Activated B cell treated with CpG ODN at 0.5 μM for 24 hours (primary cell): ENCODE measurements at regions of chr12 and their contacts with region 1.

Region 1: DNA sequence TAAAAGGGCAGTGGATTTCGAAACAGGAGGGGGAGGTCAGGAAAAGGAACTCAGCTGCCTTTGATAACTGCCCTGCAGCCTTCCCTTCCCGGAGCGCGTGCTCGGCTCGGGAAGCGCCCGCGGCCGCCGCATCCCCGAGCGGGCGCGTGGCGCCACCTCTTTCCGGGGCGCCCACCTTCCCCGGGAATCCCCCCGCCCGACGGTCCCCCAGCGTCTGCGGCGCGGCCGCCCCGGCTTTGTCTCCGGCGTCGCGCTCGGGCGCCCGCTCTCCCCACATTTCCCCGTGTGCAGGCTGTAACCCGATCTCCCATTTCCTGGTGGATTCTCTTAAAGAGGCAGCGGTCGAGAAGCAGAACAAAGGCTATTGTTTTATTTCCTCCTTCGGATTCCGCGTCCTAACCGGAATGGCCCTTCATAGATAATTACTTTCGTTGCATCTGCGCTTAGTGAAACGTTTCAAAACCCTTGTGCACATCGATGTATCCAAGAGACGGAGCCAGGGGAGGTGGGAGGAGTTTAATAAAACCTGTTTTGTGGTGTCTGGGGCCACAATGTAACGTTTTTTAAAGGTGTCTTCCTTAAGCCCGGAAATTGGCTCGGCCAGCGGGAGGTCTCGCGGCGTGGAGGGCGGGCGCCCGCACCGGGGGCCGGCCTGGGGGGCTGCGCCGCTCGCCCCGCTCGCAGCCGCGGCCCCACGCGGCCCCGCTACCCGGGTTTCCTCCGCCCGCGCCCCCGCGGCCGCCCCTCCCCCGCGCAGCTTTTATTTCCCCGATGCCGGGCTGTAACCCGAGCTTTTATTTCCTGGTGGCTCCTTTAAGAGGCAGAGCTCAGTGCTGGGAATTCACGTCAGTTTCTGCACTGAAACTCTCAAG is at the start of gene ETV6:
- DNase-seq: peak; percentile 72
- ATAC-seq: peak; percentile 54
- H3K4me3 Mint-ChIP-seq: peak within 1 kb of the TSS; percentile 99
- H3K27ac Mint-ChIP-seq: peak within 1 kb of the TSS; percentile 98
- H3K4me1 Mint-ChIP-seq: peaks cover 30% of the 10 kb centered on the region
- H3K27me3 Mint-ChIP-seq: no peaks in the 10 kb centered on the region
- CTCF ChIP-seq: no peak
- total RNA-seq, gene ETV6: 116 and 130 TPM in 2 replicates

Region 2: GRCh38 chr12:11638315-11638916 is 10.7 kb before region 1 on chr12:
- CTCF ChIA-PET with region 1: no interaction called
- POLR2A ChIA-PET with region 1: interaction called, 16 read pairs
- intact Hi-C with region 1: loop called (anchors 1 kb)
- DNase-seq: no peak
- ATAC-seq: no peak
- H3K4me3 Mint-ChIP-seq: no peak overlapping the region
- H3K27ac Mint-ChIP-seq: no peak overlapping the region
- H3K4me1 Mint-ChIP-seq: peaks cover 12% of the 10 kb centered on the region
- H3K27me3 Mint-ChIP-seq: no peaks in the 10 kb centered on the region
- CTCF ChIP-seq: no peak

Region 3: GRCh38 chr12:11711651-11712327 is 62.7 kb after region 1 on chr12:
- CTCF ChIA-PET with region 1: no interaction called
- POLR2A ChIA-PET with region 1: no interaction called
- intact Hi-C with region 1: no loop called
- DNase-seq: no peak
- ATAC-seq: no peak
- H3K4me3 Mint-ChIP-seq: no peak overlapping the region
- H3K27ac Mint-ChIP-seq: no peak overlapping the region
- H3K4me1 Mint-ChIP-seq: peaks cover 35% of the 10 kb centered on the region
- H3K27me3 Mint-ChIP-seq: no peaks in the 10 kb centered on the region
- CTCF ChIP-seq: no peak

Region 4: DNA sequence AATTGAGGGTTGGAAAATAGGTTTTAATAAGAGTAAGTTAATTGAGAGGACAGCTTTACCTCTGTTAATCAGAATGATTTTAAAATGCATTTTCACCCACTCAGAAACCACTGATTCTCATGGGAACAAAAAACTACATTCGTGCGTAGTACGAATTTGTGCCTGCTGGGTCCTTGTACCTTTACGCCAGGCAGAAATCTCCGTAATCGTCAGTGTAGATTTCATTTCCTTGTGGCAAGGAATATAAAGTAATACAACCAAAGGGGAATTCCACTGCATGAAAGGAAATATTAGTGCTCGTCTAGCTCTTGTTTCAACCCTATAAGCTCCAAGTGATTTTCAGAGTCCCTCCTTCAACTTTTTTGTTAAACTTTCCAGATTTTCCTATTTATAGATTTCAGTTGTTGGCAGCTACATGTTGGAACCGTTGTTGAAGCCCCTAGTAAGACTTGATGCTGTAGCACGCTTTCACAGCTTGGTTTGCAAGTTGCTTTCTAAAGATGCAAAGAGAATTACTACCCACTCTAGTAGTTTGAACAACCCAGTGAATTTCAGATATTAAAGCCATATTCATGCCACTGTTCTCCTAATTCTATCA is 91.0 kb after region 1 on chr12:
- CTCF ChIA-PET with region 1: interaction called, 3 read pairs
- POLR2A ChIA-PET with region 1: interaction called, 68 read pairs
- intact Hi-C with region 1: no loop called
- DNase-seq: no peak
- ATAC-seq: peak; percentile 73
- H3K4me3 Mint-ChIP-seq: peak overlapping the region; percentile 66
- H3K27ac Mint-ChIP-seq: peak overlapping the region; percentile 86
- H3K4me1 Mint-ChIP-seq: peaks cover 95% of the 10 kb centered on the region
- H3K27me3 Mint-ChIP-seq: no peaks in the 10 kb centered on the region
- CTCF ChIP-seq: no peak

Region 5: GRCh38 chr12:11765817-11766794 is 117.0 kb after region 1 on chr12:
- CTCF ChIA-PET with region 1: no interaction called
- POLR2A ChIA-PET with region 1: interaction called, 101 read pairs
- intact Hi-C with region 1: loop called (anchors 1 kb)
- DNase-seq: peak; percentile 48
- ATAC-seq: peak; percentile 84
- H3K4me3 Mint-ChIP-seq: peak overlapping the region; percentile 77
- H3K27ac Mint-ChIP-seq: peak overlapping the region; percentile 93
- H3K4me1 Mint-ChIP-seq: peaks cover 92% of the 10 kb centered on the region
- H3K27me3 Mint-ChIP-seq: no peaks in the 10 kb centered on the region
- CTCF ChIP-seq: no peak

Region 6: DNA sequence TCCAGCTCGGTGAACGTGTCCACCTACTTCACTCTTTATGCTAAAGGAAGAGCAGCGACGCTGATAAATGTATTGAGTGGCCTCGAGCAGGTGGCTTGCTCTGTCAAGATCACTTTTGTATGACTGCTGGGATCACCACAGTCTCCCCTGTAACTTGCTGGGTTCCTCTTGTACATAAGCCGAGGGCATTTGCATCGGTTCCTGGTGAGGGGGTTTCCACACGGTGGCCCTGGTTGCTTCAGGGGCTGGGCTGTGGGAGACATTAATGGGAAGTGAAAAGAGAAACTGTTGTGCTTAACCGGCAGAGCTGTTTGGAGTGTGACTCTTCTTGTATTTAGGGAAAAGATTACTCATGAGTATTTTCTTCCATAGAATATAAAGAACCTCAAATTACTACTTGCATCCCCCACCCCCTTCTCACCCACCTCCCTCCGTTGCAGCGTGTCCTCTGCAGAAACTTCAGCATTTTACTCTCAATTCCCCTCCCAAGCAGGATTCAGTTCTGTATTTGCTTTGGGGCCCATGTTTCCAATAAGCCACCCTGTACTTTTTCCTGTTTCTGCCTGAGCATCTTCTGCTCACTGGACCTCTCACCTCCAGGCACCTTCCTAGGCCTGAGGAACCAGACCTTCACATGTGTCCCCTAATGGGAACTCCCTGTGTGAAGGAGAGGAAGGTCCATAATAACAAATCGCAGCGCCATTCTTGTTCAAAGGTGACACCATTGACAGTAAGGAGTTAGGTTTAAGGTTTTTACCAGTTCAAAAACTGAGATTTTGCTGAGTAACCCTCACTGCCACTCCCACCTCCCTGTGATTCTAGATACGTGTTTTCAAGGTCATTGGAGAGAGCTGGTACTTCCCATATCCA is 187.4 kb after region 1 on chr12:
- CTCF ChIA-PET with region 1: no interaction called
- POLR2A ChIA-PET with region 1: interaction called, 34 read pairs
- intact Hi-C with region 1: loop called (anchors 1 kb)
- DNase-seq: peak; percentile 73
- ATAC-seq: peak; percentile 94
- H3K4me3 Mint-ChIP-seq: peak overlapping the region; percentile 73
- H3K27ac Mint-ChIP-seq: peak overlapping the region; percentile 95
- H3K4me1 Mint-ChIP-seq: peaks cover 81% of the 10 kb centered on the region
- H3K27me3 Mint-ChIP-seq: no peaks in the 10 kb centered on the region
- CTCF ChIP-seq: no peak

Region 7: GRCh38 chr12:12387501-12387900 is 738.4 kb after region 1 on chr12:
- CTCF ChIA-PET with region 1: no interaction called
- POLR2A ChIA-PET with region 1: no interaction called
- intact Hi-C with region 1: no loop called
- DNase-seq: no peak
- ATAC-seq: no peak
- H3K4me3 Mint-ChIP-seq: no peak overlapping the region
- H3K27ac Mint-ChIP-seq: no peak overlapping the region
- H3K4me1 Mint-ChIP-seq: no peaks in the 10 kb centered on the region
- H3K27me3 Mint-ChIP-seq: no peaks in the 10 kb centered on the region
- CTCF ChIP-seq: no peak